ENCODE measurements at regions of chr18 and their contacts with region 1.

Region 1: GRCh38 chr18:67515945-67516538 is 478 bp downstream of the DSEL start:
- DNase-seq: peak; percentile 86 to 93
- ATAC-seq: peak; percentile 88
- H3K4me3 ChIP-seq: peak overlapping the region; percentile 68 to 98
- H3K27ac ChIP-seq: peak overlapping the region; percentile 73 to 78
- H3K4me1 ChIP-seq: peaks cover 0 to 4% of the 10 kb centered on the region in 2 donors
- H3K27me3 ChIP-seq: no peaks in the 10 kb centered on the region

Region 2: DNA sequence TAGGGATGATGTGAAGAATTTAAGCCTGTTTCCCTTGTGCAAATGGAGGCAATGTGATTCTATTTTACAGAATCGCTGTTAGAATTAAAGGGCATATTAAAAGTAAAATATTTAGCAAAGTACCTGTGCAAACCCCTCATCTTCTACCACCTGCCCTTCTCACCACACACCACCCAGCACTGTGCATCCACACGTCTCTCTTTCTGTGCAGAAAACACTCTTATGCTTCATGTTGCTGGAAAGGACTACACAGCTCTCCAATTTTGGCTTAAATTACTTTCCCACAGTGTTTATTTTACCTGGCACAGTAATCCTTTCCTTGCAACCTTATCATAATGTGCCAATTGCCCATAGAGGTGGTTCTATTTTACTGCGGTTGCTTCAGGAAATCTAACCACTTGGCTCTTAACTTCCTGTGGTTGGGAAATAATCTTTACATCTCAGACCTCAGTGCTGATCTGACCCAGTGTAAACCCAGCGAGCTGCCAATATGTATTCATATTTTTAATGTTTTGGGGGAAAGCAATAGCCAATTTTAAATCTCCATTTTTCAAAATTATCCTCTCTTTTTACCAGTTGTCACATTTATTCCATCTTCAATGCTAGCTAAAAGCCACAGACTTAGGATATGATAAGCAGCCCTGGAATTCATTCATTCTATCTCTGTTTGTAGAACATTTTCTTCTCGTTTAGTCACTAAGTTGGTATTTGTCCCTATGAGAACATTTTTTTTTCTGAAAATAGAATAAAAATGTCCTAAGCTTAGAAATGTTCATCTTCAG is 250.4 kb before region 1 on chr18:
- intact Hi-C with region 1: loop called (anchors 10 kb)
- DNase-seq: no peak
- ATAC-seq: peak; percentile 68
- H3K4me3 ChIP-seq: no peak overlapping the region
- H3K27ac ChIP-seq: peak overlapping the region in 1 of 2 donors; percentile 82
- H3K4me1 ChIP-seq: peaks cover 0 to 2% of the 10 kb centered on the region in 2 donors
- H3K27me3 ChIP-seq: no peaks in the 10 kb centered on the region

Region 3: DNA sequence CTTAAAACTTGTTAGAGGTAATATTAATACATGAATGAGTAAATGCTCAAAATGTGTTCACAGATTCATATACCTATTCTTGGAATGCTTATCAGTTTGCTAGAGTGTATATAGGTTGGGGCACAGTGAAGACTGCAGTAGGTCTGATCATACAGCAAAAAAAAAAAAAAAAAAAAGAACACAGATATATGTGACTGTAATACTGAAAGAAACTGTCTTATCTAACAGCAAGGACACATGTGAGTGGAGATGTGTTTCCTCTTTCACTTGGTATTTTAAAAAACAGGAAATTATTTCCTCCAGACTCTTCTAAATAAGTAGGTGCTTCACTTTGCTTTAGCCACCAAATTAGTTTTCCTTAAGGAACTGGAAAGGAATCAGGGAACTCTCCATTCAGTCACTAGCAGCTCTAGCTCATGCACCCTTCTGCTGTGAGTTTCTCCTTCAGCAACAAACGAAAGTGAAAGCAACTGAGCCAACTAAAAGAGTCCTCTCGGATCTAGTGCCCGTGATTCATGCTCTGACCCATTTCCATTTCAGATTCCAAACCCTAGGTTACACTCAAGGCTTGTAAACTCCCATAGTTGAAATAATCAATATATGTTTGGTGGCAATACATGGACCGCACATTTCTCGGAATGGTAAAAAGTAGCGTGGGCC is 98.0 kb before region 1 on chr18:
- intact Hi-C with region 1: loop called in 1 of 2 experiments (anchors 10 kb)
- DNase-seq: no peak
- ATAC-seq: peak; percentile 82
- H3K4me3 ChIP-seq: peak overlapping the region in 1 of 2 donors; percentile 41
- H3K27ac ChIP-seq: no peak overlapping the region
- H3K4me1 ChIP-seq: no peaks in the 10 kb centered on the region
- H3K27me3 ChIP-seq: no peaks in the 10 kb centered on the region

Region 4: GRCh38 chr18:67864677-67865340 is 348.8 kb after region 1 on chr18:
- intact Hi-C with region 1: loop called in 1 of 2 experiments (anchors 10 kb)
- DNase-seq: no peak
- ATAC-seq: no peak
- H3K4me3 ChIP-seq: no peak overlapping the region
- H3K27ac ChIP-seq: no peak overlapping the region
- H3K4me1 ChIP-seq: no peaks in the 10 kb centered on the region
- H3K27me3 ChIP-seq: no peaks in the 10 kb centered on the region

Region 5: DNA sequence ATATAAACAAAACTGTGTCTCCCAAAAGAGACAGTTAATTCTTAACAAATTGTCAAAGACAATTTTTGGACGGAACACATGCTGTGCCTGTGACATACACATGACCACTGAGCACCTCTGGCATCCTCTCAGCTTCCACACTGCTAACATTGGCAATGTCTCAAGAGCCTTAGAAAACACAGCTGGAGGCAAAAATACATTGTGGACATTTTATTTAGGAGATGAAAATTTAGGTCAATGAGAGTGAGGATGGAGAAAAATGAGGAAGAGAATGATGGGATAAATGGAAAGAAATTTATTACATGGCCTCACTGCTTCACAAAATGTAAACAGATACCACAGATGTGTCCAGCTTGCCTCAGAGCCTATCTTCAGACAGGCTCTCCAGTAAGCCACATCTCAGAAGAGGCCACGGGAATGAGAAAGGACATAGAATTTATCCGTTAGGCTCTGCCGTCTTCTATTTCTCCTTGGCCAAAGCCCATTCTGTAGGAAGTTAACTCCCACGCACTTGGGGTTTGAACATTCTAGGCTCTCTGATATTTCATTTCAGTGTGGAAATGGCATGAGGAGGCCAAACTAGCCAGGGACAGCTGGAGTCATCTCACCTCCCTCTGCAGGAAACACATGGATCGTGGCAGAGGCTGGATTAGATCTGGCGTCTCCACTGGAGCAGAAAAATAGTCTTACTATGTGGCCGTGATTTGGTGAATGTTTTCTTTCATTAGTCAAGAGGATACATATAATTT is 519.9 kb after region 1 on chr18:
- intact Hi-C with region 1: no loop called
- DNase-seq: no peak
- ATAC-seq: no peak
- H3K4me3 ChIP-seq: no peak overlapping the region
- H3K27ac ChIP-seq: no peak overlapping the region
- H3K4me1 ChIP-seq: peaks cover 0 to 2% of the 10 kb centered on the region in 2 donors
- H3K27me3 ChIP-seq: no peaks in the 10 kb centered on the region

Region 6: DNA sequence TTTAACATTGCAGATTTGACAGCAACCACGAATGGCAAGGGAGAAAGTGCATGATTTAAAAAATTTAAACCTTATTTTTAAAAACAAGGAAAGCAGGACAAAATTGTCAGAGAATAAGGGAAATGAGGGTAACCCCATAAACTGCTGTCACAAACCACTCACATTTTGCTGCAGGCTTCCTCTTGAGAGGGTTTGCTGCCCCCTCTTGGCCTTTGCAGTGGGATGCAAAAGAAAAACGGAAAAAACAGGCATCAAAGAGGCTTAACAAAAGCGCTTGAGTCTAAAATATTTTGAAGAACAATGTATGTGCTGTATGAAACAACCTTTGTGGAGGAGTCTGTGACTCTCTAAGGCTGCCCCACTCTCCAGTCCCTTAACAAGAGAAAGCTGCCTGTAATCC is 1107.3 kb after region 1 on chr18:
- intact Hi-C with region 1: loop called (anchors 10 kb)
- DNase-seq: peak in 1 of 2 donors; percentile 47
- ATAC-seq: peak; percentile 71
- H3K4me3 ChIP-seq: no peak overlapping the region
- H3K27ac ChIP-seq: no peak overlapping the region
- H3K4me1 ChIP-seq: no peaks in the 10 kb centered on the region
- H3K27me3 ChIP-seq: no peaks in the 10 kb centered on the region